ENCODE measurements at regions of chr4 and their contacts with region 1.

Region 1: GRCh38 chr4:155376387-155377268 is at the start of gene MAP9:
- DNase-seq: peak; percentile 78 to 98 (median 89)
- ATAC-seq: peak; percentile 88
- H3K4me3 ChIP-seq: peak within 1 kb of the TSS; percentile 77 to 84
- H3K4me3 Mint-ChIP-seq: peak within 1 kb of the TSS; percentile 90
- H3K27ac ChIP-seq: peak within 1 kb of the TSS; percentile 86 to 88
- H3K27ac Mint-ChIP-seq: peak within 1 kb of the TSS; percentile 89
- H3K4me1 ChIP-seq: peaks cover 8% of the 10 kb centered on the region
- H3K4me1 Mint-ChIP-seq: peaks cover 22% of the 10 kb centered on the region
- H3K27me3 ChIP-seq: no peaks in the 10 kb centered on the region
- H3K27me3 Mint-ChIP-seq: no peaks in the 10 kb centered on the region
- CTCF ChIP-seq: no peak
- total RNA-seq, gene MAP9: 17.2 to 18.6 TPM

Region 2: GRCh38 chr4:154807042-154807630 is 569.5 kb before region 1 on chr4:
- CTCF ChIA-PET with region 1: no interaction called
- POLR2A ChIA-PET with region 1: no interaction called
- intact Hi-C with region 1: loop called in 1 of 2 experiments (anchors 5 kb)
- DNase-seq: peak in 2 of 9 experiments; percentile 8 to 25
- ATAC-seq: no peak
- H3K4me3 ChIP-seq: no peak overlapping the region
- H3K4me3 Mint-ChIP-seq: no peak overlapping the region
- H3K27ac ChIP-seq: no peak overlapping the region
- H3K27ac Mint-ChIP-seq: no peak overlapping the region
- H3K4me1 ChIP-seq: no peaks in the 10 kb centered on the region
- H3K4me1 Mint-ChIP-seq: peaks cover 1% of the 10 kb centered on the region
- H3K27me3 ChIP-seq: no peaks in the 10 kb centered on the region
- H3K27me3 Mint-ChIP-seq: no peaks in the 10 kb centered on the region
- CTCF ChIP-seq: peak; percentile 52

Region 3: GRCh38 chr4:155473420-155474095 is 96.9 kb after region 1 on chr4:
- CTCF ChIA-PET with region 1: no interaction called
- POLR2A ChIA-PET with region 1: no interaction called
- intact Hi-C with region 1: no loop called
- DNase-seq: no peak
- ATAC-seq: no peak
- H3K4me3 ChIP-seq: no peak overlapping the region
- H3K4me3 Mint-ChIP-seq: no peak overlapping the region
- H3K27ac ChIP-seq: no peak overlapping the region
- H3K27ac Mint-ChIP-seq: no peak overlapping the region
- H3K4me1 ChIP-seq: no peaks in the 10 kb centered on the region
- H3K4me1 Mint-ChIP-seq: no peaks in the 10 kb centered on the region
- H3K27me3 ChIP-seq: no peaks in the 10 kb centered on the region
- H3K27me3 Mint-ChIP-seq: peaks cover 4% of the 10 kb centered on the region
- CTCF ChIP-seq: no peak

Region 4: DNA sequence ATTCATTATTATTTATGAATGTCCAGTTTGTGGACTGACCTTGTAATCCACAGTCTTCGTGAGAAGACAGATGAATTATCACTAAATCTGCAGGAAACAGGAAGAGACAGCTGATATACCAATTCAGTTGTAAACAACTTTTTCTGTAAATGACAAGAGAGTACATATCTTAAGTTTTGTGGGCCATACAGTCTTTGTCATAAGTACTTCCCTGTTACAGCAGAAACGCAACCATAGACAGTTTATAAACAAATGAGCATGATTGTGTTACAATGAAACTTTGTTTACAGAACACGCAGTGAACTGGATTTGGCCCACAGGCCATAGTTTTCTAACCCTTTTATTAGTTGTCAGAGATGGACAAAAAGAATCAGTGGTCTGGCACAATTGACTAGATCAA is 1151.6 kb after region 1 on chr4:
- CTCF ChIA-PET with region 1: no interaction called
- POLR2A ChIA-PET with region 1: no interaction called
- intact Hi-C with region 1: no loop called
- DNase-seq: no peak
- ATAC-seq: no peak
- H3K4me3 ChIP-seq: no peak overlapping the region
- H3K4me3 Mint-ChIP-seq: no peak overlapping the region
- H3K27ac ChIP-seq: no peak overlapping the region
- H3K27ac Mint-ChIP-seq: no peak overlapping the region
- H3K4me1 ChIP-seq: no peaks in the 10 kb centered on the region
- H3K4me1 Mint-ChIP-seq: no peaks in the 10 kb centered on the region
- H3K27me3 ChIP-seq: no peaks in the 10 kb centered on the region
- H3K27me3 Mint-ChIP-seq: no peaks in the 10 kb centered on the region
- CTCF ChIP-seq: no peak